Transverse colon (tissue), 4 donors: ENCODE measurements at regions of chr7 and their contacts with region 1.

Region 1: GRCh38 chr7:21507626-21508343 is 35.1 kb upstream of the DNAH11 start:
- DNase-seq: peak; percentile 55
- H3K4me3 ChIP-seq: no peak overlapping the region
- H3K27ac ChIP-seq: no peak overlapping the region
- H3K4me1 ChIP-seq: no peaks in the 10 kb centered on the region
- H3K27me3 ChIP-seq: no peaks in the 10 kb centered on the region
- CTCF ChIP-seq: peak; percentile 69 to 77 (median 73)
- EP300 ChIP-seq: no peak
- POLR2A ChIP-seq: no peak

Region 2: GRCh38 chr7:21253740-21254687 is 253.8 kb before region 1 on chr7:
- in situ Hi-C with region 1: loop called (anchors 5 to 25 kb)
- intact Hi-C with region 1: no loop called
- DNase-seq: peak; percentile 57
- H3K4me3 ChIP-seq: no peak overlapping the region
- H3K27ac ChIP-seq: no peak overlapping the region
- H3K4me1 ChIP-seq: peaks cover 0 to 5% (median 0%) of the 10 kb centered on the region in 4 donors
- H3K27me3 ChIP-seq: peaks cover 65% of the 10 kb centered on the region
- CTCF ChIP-seq: peak in 4 of 5 experiments; percentile 38 to 51 (median 46)
- EP300 ChIP-seq: no peak
- POLR2A ChIP-seq: no peak

Region 3: DNA sequence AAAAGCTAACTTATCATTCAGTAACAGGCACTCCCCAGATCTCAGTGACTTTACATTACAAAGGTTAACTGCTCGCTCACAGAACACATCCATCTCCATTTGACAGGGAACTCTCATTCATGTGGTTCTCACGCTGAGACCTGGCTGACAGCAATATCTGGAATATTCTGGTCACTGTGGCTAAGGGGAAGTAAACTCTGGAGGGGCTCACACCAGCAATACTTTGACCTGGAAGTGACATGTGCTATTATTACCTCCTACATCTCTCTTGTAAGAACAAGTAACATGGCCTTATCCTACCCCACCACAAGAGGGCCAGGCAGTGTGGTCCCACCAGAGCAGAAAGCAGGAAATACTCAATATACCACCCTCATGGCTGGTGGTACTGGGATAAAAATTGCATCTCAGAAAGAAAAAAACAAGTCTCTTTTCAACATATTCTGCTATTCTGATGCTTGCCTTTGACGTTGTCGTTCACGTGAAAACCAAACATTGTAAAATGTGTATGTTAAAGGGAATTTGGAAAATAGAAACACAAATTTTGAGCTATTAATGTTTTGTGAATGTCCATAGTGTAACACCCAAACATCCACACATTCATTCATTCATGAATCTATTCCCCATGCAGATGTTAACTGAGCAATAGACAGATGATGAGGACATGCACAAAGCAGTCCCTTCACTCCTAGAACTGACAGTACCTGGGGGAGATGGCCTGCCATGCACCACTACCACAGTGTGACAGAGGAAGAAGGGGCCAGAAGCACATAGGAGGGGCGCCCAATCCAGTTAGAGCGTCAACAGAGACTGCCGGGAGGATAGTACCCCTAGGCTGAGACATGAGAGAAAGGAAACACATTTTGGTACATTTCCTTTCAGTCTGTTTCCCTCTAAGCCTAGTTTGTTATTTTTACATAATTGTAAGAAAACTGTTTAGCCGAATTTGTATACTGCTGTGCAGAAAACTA is 245.9 kb before region 1 on chr7:
- in situ Hi-C with region 1: loop called (anchors 5 to 25 kb)
- intact Hi-C with region 1: no loop called
- DNase-seq: peak; percentile 25
- H3K4me3 ChIP-seq: no peak overlapping the region
- H3K27ac ChIP-seq: no peak overlapping the region
- H3K4me1 ChIP-seq: no peaks in the 10 kb centered on the region
- H3K27me3 ChIP-seq: peaks cover 20% of the 10 kb centered on the region
- CTCF ChIP-seq: peak; percentile 30 to 48 (median 39)
- EP300 ChIP-seq: no peak
- POLR2A ChIP-seq: no peak